ENCODE measurements at regions of chr17 and their contacts with region 1.

Region 1: GRCh38 chr17:21252796-21253645 is at the start of gene NATD1:
- DNase-seq: peak; percentile 73 to 87 (median 76)
- H3K4me3 ChIP-seq: peak within 1 kb of the TSS; percentile 88
- H3K4me3 Mint-ChIP-seq: peak within 1 kb of the TSS; percentile 87 to 98 (median 90)
- H3K27ac ChIP-seq: peak within 1 kb of the TSS; percentile 67
- H3K27ac Mint-ChIP-seq: peak within 1 kb of the TSS; percentile 82 to 98 (median 92)
- H3K4me1 ChIP-seq: peaks cover 20% of the 10 kb centered on the region
- H3K4me1 Mint-ChIP-seq: peaks cover 32 to 57% (median 46%) of the 10 kb centered on the region in 3 donors
- H3K27me3 ChIP-seq: no peaks in the 10 kb centered on the region
- H3K27me3 Mint-ChIP-seq: no peaks in the 10 kb centered on the region
- total RNA-seq, gene NATD1: 2.7 to 2.8 TPM

Region 2: GRCh38 chr17:21239680-21240368 is 13.2 kb before region 1 on chr17:
- CTCF ChIA-PET with region 1: interaction called, 10 read pairs
- POLR2A ChIA-PET with region 1: no interaction called
- DNase-seq: no peak
- H3K4me3 ChIP-seq: no peak overlapping the region
- H3K4me3 Mint-ChIP-seq: no peak overlapping the region
- H3K27ac ChIP-seq: no peak overlapping the region
- H3K27ac Mint-ChIP-seq: no peak overlapping the region
- H3K4me1 ChIP-seq: no peaks in the 10 kb centered on the region
- H3K4me1 Mint-ChIP-seq: peaks cover 0 to 2% (median 1%) of the 10 kb centered on the region in 3 donors
- H3K27me3 ChIP-seq: no peaks in the 10 kb centered on the region
- H3K27me3 Mint-ChIP-seq: peaks cover 0 to 2% of the 10 kb centered on the region in 2 donors

Region 3: GRCh38 chr17:21275579-21276263 is 22.7 kb after region 1 on chr17:
- CTCF ChIA-PET with region 1: interaction called, 5 read pairs
- POLR2A ChIA-PET with region 1: interaction called, 18 read pairs
- DNase-seq: peak; percentile 86 to 95 (median 92)
- H3K4me3 ChIP-seq: peak overlapping the region; percentile 66
- H3K4me3 Mint-ChIP-seq: peak overlapping the region; percentile 71 to 92 (median 89)
- H3K27ac ChIP-seq: peak overlapping the region; percentile 60
- H3K27ac Mint-ChIP-seq: peak overlapping the region; percentile 67 to 96 (median 88)
- H3K4me1 ChIP-seq: peaks cover 45% of the 10 kb centered on the region
- H3K4me1 Mint-ChIP-seq: peaks cover 34 to 45% (median 41%) of the 10 kb centered on the region in 3 donors
- H3K27me3 ChIP-seq: no peaks in the 10 kb centered on the region
- H3K27me3 Mint-ChIP-seq: peaks cover 0 to 1% of the 10 kb centered on the region in 2 donors

Region 4: GRCh38 chr17:21330436-21331160 is 77.6 kb after region 1 on chr17:
- CTCF ChIA-PET with region 1: no interaction called
- POLR2A ChIA-PET with region 1: no interaction called
- DNase-seq: no peak
- H3K4me3 ChIP-seq: no peak overlapping the region
- H3K4me3 Mint-ChIP-seq: no peak overlapping the region
- H3K27ac ChIP-seq: no peak overlapping the region
- H3K27ac Mint-ChIP-seq: no peak overlapping the region
- H3K4me1 ChIP-seq: no peaks in the 10 kb centered on the region
- H3K4me1 Mint-ChIP-seq: no peaks in the 10 kb centered on the region
- H3K27me3 ChIP-seq: no peaks in the 10 kb centered on the region
- H3K27me3 Mint-ChIP-seq: peaks cover 3 to 11% of the 10 kb centered on the region in 2 donors

Region 5: GRCh38 chr17:21445091-21445650 is 192.2 kb after region 1 on chr17:
- CTCF ChIA-PET with region 1: no interaction called
- POLR2A ChIA-PET with region 1: no interaction called
- DNase-seq: no peak
- H3K4me3 ChIP-seq: no peak overlapping the region
- H3K4me3 Mint-ChIP-seq: no peak overlapping the region
- H3K27ac ChIP-seq: no peak overlapping the region
- H3K27ac Mint-ChIP-seq: no peak overlapping the region
- H3K4me1 ChIP-seq: no peaks in the 10 kb centered on the region
- H3K4me1 Mint-ChIP-seq: no peaks in the 10 kb centered on the region
- H3K27me3 ChIP-seq: no peaks in the 10 kb centered on the region
- H3K27me3 Mint-ChIP-seq: peaks cover 13 to 29% of the 10 kb centered on the region in 2 donors